Naive thymus-derived CD4-positive, alpha-beta T cell (primary cell): ENCODE measurements at regions of chr13 and their contacts with region 1.

Region 1: GRCh38 chr13:21638319-21639282 is 32.3 kb upstream of the FGF9 start:
- DNase-seq: peak in 5 of 9 donors; percentile 21 to 47 (median 38)
- ATAC-seq: peak; percentile 51
- H3K4me3 ChIP-seq: no peak overlapping the region
- H3K4me3 Mint-ChIP-seq: no peak overlapping the region
- H3K27ac ChIP-seq: no peak overlapping the region
- H3K27ac Mint-ChIP-seq: no peak overlapping the region
- H3K4me1 ChIP-seq: no peaks in the 10 kb centered on the region
- H3K4me1 Mint-ChIP-seq: peaks cover 0 to 5% (median 0%) of the 10 kb centered on the region in 7 donors
- H3K27me3 ChIP-seq: no peaks in the 10 kb centered on the region
- H3K27me3 Mint-ChIP-seq: peaks cover 0 to 7% (median 3%) of the 10 kb centered on the region in 5 donors

Region 2: DNA sequence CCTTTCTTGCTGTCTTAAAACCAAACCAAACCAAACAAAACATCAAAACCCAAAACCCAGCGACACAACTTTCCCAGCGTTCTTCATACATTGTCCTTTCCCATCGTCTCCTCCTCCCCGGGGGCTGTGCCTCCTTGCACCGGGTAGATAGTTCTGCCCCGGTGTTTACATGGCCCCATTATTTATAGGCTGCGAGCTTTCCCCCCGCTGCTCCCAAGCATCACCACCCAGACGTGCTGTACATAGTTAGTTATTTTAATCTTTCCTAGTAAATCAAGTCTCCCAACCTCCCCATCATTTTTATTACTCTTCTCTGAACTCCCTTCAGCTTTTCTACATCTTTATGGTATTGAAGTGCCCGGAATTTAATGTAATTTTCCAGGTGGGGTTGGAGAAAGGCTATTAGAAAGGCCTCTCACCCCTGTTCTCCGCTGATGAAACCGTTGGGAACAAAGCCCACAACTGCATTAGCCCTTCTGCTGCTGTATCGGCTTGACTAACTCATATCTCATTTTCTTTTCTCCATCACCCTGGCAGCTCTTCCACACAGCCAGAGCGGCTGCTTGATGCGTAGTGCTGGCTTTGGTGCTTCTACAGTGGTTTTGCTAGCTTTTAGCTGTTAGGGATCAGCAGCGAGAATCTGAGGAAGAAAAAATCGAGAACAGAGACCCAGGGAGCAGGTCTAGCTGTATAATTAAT is 85.4 kb after region 1 on chr13:
- CTCF ChIA-PET with region 1: no interaction called
- POLR2A ChIA-PET with region 1: no interaction called
- intact Hi-C with region 1: no loop called
- DNase-seq: no peak
- ATAC-seq: no peak
- H3K4me3 ChIP-seq: no peak overlapping the region
- H3K4me3 Mint-ChIP-seq: no peak overlapping the region
- H3K27ac ChIP-seq: no peak overlapping the region
- H3K27ac Mint-ChIP-seq: no peak overlapping the region
- H3K4me1 ChIP-seq: no peaks in the 10 kb centered on the region
- H3K4me1 Mint-ChIP-seq: peaks cover 0 to 4% (median 2%) of the 10 kb centered on the region in 7 donors
- H3K27me3 ChIP-seq: no peaks in the 10 kb centered on the region
- H3K27me3 Mint-ChIP-seq: peaks cover 0 to 45% (median 31%) of the 10 kb centered on the region in 5 donors

Region 3: DNA sequence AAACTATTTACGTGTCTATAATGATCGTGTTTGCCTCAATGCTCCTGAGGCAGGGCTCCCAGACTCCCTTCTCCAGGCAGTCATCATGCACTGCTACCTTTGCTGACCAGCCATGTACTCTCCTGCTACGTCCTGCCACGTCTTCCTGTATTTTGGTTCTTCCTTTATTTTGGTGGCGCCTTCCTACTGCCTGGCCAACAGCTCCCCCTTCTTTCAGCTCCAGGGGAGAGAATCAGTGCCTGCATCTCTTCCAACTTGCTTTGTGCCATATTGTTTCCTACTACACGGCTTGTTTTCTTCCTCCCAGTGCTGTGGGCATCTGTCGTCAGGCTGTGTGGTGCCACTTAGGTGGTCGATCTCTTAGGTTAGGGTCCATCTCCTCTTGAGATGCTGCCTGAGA is 128.4 kb after region 1 on chr13:
- CTCF ChIA-PET with region 1: no interaction called
- POLR2A ChIA-PET with region 1: no interaction called
- intact Hi-C with region 1: loop called in 1 of 2 experiments (anchors 5 kb)
- DNase-seq: no peak
- ATAC-seq: no peak
- H3K4me3 ChIP-seq: no peak overlapping the region
- H3K4me3 Mint-ChIP-seq: no peak overlapping the region
- H3K27ac ChIP-seq: no peak overlapping the region
- H3K27ac Mint-ChIP-seq: no peak overlapping the region
- H3K4me1 ChIP-seq: no peaks in the 10 kb centered on the region
- H3K4me1 Mint-ChIP-seq: no peaks in the 10 kb centered on the region
- H3K27me3 ChIP-seq: no peaks in the 10 kb centered on the region
- H3K27me3 Mint-ChIP-seq: peaks cover 4 to 24% (median 15%) of the 10 kb centered on the region in 5 donors

Region 4: GRCh38 chr13:21971662-21972621 is 333.3 kb after region 1 on chr13:
- CTCF ChIA-PET with region 1: no interaction called
- POLR2A ChIA-PET with region 1: no interaction called
- intact Hi-C with region 1: loop called in 1 of 2 experiments (anchors 5 kb)
- DNase-seq: no peak
- ATAC-seq: no peak
- H3K4me3 ChIP-seq: no peak overlapping the region
- H3K4me3 Mint-ChIP-seq: no peak overlapping the region
- H3K27ac ChIP-seq: no peak overlapping the region
- H3K27ac Mint-ChIP-seq: no peak overlapping the region
- H3K4me1 ChIP-seq: no peaks in the 10 kb centered on the region
- H3K4me1 Mint-ChIP-seq: no peaks in the 10 kb centered on the region
- H3K27me3 ChIP-seq: no peaks in the 10 kb centered on the region
- H3K27me3 Mint-ChIP-seq: peaks cover 0 to 4% (median 0%) of the 10 kb centered on the region in 5 donors

Region 5: DNA sequence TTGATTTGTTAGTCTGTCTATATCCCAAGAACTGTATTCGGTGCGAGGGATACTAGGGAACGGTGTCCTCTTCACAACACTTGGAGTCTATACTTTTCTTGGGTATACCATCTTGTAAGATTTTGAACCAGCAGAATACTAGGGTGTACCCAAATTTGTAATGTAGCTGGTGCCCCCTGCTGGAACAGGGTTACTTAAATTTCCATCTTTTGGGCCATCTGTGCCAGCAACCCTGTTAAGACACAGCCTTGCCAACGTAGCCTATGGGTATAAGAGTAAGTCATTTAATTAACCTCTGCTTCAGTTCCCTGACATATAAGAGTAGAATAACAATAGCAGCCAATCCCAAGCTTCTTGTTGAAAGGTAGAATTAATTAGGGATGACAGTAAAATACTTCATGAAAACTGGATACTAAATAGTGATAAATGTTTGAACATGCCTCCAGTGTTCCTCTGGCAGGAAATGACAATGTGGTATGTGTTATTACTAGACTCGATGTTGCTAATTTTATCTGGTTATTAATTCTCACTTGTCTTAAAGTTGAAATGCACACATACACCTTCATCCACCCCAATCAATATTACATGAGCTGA is 639.8 kb after region 1 on chr13:
- CTCF ChIA-PET with region 1: interaction called, 4 read pairs
- POLR2A ChIA-PET with region 1: no interaction called
- intact Hi-C with region 1: loop called (anchors 1 kb)
- DNase-seq: peak; percentile 27 to 71 (median 55)
- ATAC-seq: peak; percentile 73
- H3K4me3 ChIP-seq: no peak overlapping the region
- H3K4me3 Mint-ChIP-seq: peak overlapping the region in 1 of 10 donors; percentile 14
- H3K27ac ChIP-seq: no peak overlapping the region
- H3K27ac Mint-ChIP-seq: peak overlapping the region in 2 of 9 donors; percentile 5 to 43
- H3K4me1 ChIP-seq: peaks cover 0 to 4% of the 10 kb centered on the region in 2 donors
- H3K4me1 Mint-ChIP-seq: peaks cover 0 to 21% (median 7%) of the 10 kb centered on the region in 7 donors
- H3K27me3 ChIP-seq: no peaks in the 10 kb centered on the region
- H3K27me3 Mint-ChIP-seq: no peaks in the 10 kb centered on the region

Region 6: DNA sequence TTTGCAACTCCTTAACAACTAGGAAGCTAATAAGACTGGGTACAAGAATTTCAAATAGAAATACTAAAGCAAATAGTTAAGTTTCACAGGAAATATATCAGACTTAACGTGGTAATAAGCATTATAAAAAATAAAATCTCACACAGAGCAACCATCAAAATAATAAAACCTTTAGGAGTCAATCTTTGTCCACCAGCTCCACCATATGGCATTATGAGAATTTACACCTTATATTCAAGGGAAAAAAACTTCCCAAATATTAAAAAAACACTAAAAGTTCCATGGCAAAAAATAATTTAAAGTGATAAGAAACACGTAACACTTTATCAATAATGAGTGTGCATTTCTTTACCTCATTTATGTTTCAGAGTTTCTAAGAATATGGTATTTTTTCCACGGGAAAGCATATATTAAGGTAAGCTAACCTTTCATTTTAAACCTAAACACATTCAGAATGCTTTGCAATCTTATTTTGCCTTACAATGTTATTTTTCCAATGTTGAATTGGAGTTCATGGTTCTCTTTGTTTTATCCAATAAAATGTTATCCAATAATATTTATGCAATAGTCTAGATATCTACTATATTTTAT is 1119.0 kb after region 1 on chr13:
- CTCF ChIA-PET with region 1: no interaction called
- POLR2A ChIA-PET with region 1: no interaction called
- intact Hi-C with region 1: loop called in 1 of 2 experiments (anchors 1 kb)
- DNase-seq: no peak
- ATAC-seq: no peak
- H3K4me3 ChIP-seq: no peak overlapping the region
- H3K4me3 Mint-ChIP-seq: no peak overlapping the region
- H3K27ac ChIP-seq: no peak overlapping the region
- H3K27ac Mint-ChIP-seq: no peak overlapping the region
- H3K4me1 ChIP-seq: no peaks in the 10 kb centered on the region
- H3K4me1 Mint-ChIP-seq: no peaks in the 10 kb centered on the region
- H3K27me3 ChIP-seq: no peaks in the 10 kb centered on the region
- H3K27me3 Mint-ChIP-seq: peaks cover 0 to 16% (median 12%) of the 10 kb centered on the region in 5 donors

Region 7: GRCh38 chr13:23020223-23020843 is 1381.7 kb after region 1 on chr13:
- CTCF ChIA-PET with region 1: interaction called, 4 read pairs
- POLR2A ChIA-PET with region 1: no interaction called
- intact Hi-C with region 1: loop called in 1 of 2 experiments (anchors 2 kb)
- DNase-seq: peak in 5 of 9 donors; percentile 2 to 32 (median 16)
- ATAC-seq: peak; percentile 81
- H3K4me3 ChIP-seq: no peak overlapping the region
- H3K4me3 Mint-ChIP-seq: no peak overlapping the region
- H3K27ac ChIP-seq: no peak overlapping the region
- H3K27ac Mint-ChIP-seq: no peak overlapping the region
- H3K4me1 ChIP-seq: no peaks in the 10 kb centered on the region
- H3K4me1 Mint-ChIP-seq: no peaks in the 10 kb centered on the region
- H3K27me3 ChIP-seq: no peaks in the 10 kb centered on the region
- H3K27me3 Mint-ChIP-seq: peaks cover 0 to 23% (median 11%) of the 10 kb centered on the region in 5 donors